Ovary (tissue), 10 donors: ENCODE measurements at regions of chr9 and their contacts with region 1.

Region 1: DNA sequence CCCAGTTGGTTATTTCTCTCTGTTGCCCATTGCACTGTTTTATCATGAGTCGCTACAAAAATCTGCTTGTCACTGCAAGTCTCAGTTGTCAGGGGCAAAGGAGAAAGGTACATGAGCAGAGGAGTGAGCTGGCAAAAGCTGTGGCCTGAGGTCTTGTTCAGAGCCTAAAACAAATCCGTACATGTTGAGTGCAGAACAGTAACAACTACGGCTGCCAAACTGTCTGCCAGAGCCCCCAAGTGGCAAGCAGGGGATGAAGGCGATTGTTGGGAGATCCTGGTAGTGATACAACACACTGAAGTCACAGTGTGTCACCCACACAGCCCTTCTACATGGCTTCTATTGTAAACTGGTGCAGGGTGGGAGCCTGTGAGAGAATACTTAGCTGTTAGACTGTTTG is 50.9 kb downstream of the BRINP1 start:
- DNase-seq: no peak
- H3K4me3 ChIP-seq: no peak overlapping the region
- H3K27ac ChIP-seq: no peak overlapping the region
- H3K4me1 ChIP-seq: peaks cover 3% of the 10 kb centered on the region
- H3K27me3 ChIP-seq: no peaks in the 10 kb centered on the region
- CTCF ChIP-seq: no peak
- EP300 ChIP-seq: no peak
- POLR2A ChIP-seq: no peak

Region 2: DNA sequence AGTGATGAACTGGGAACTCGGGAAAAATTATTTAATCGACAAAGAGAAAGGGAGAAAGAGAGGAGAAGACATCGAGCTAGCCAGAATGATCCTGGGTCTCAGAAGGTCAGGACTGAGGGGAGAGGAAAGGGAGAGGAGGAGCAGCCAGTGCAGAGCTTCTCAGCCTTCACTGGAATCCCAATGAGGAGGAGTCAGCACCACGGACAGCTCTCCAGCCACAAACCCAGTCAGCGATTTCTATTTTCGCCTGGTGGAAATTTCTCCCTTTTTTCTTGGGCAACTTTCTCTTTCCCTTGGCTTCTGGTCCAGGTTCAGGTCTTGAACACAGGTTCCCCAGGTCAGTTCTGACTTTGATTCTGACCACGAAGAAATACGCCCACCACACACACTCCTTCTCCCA is 52.4 kb after region 1 on chr9:
- intact Hi-C with region 1: loop called in 1 of 4 experiments (anchors 10 kb)
- DNase-seq: peak in 3 of 5 donors; percentile 19 to 55 (median 32)
- H3K4me3 ChIP-seq: no peak overlapping the region
- H3K27ac ChIP-seq: no peak overlapping the region
- H3K4me1 ChIP-seq: peaks cover 3% of the 10 kb centered on the region
- H3K27me3 ChIP-seq: no peaks in the 10 kb centered on the region
- CTCF ChIP-seq: no peak
- EP300 ChIP-seq: no peak
- POLR2A ChIP-seq: no peak